Activated CD4-positive, alpha-beta T cell treated with anti-CD3 and anti-CD28 coated beads, Interleukin-2, amount 10 ng/mL, durations not matched to agents 24 days and 14 days (primary cell): ENCODE measurements at regions of chr12 and their contacts with region 1.

Region 1: DNA sequence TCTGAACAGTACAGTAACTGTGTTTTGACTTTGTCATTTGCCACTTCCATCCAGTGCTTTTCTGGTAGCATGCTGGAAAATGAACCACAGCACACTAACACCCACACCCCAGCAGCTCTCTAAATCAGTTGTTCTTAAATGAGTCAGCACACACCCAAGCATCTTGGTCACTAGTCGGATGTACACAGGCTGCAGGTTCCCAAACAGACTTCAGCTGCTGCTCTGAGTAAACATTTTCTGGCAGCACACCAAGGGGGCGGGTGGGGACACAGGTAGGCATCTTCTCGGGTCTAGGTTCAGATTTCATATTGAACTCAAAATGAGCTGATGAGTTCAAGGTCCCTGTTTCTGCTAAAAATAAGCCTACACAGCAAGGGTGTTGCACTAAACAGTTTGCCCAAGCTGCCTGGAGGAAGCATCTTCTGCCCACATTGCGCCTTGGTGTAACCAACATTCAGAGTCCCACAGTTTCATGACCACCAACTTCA is 39.8 kb downstream of the IFNG start:
- DNase-seq: peak; percentile 88
- H3K4me3 Mint-ChIP-seq: peak overlapping the region; percentile 39
- H3K27ac Mint-ChIP-seq: no peak overlapping the region
- H3K4me1 Mint-ChIP-seq: peaks cover 35% of the 10 kb centered on the region
- H3K27me3 Mint-ChIP-seq: no peaks in the 10 kb centered on the region

Region 2: DNA sequence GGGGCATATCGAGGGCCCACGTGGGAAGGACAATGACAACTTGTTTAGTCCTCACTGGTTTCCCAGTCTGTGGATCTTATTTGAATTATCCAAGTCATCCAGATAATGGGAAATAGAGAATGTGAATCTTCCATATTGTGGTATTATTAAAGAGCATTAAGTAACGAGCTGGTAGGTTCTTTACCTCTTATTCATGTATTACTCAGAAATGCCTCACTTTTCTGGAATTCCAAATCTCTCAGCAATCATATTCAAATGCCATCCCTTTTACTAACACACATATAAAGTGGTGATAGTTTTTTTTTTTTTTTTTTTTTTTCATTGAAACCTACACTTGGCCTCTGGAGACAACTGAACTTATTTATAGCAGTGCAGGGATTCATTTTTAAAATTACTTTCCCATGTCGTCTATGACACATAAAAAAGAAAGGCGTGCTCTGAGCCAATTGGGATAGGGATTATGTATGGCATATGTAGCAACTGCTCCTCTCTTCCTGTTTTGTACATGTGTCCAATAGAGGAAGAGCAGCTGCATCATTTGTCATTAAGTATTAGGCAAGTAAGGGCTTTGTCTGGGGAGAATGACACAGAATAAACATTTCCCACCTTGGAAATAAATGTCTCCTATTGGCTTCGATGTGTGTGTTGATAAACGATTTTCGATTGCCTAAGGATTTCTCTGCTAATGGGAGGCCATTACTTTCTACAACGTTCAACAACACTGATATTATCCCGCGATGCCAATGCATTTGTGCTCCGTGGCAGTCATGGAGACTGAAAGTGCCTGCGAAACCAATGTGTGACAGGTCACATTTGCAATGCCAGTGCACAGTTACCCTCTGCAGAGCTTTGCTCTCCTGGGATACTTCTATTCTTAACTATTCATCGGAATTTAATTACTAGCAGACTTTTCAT is 209.2 kb before region 1 on chr12:
- intact Hi-C with region 1: no loop called
- DNase-seq: peak; percentile 41
- H3K4me3 Mint-ChIP-seq: no peak overlapping the region
- H3K27ac Mint-ChIP-seq: no peak overlapping the region
- H3K4me1 Mint-ChIP-seq: no peaks in the 10 kb centered on the region
- H3K27me3 Mint-ChIP-seq: peaks cover 13% of the 10 kb centered on the region

Region 3: DNA sequence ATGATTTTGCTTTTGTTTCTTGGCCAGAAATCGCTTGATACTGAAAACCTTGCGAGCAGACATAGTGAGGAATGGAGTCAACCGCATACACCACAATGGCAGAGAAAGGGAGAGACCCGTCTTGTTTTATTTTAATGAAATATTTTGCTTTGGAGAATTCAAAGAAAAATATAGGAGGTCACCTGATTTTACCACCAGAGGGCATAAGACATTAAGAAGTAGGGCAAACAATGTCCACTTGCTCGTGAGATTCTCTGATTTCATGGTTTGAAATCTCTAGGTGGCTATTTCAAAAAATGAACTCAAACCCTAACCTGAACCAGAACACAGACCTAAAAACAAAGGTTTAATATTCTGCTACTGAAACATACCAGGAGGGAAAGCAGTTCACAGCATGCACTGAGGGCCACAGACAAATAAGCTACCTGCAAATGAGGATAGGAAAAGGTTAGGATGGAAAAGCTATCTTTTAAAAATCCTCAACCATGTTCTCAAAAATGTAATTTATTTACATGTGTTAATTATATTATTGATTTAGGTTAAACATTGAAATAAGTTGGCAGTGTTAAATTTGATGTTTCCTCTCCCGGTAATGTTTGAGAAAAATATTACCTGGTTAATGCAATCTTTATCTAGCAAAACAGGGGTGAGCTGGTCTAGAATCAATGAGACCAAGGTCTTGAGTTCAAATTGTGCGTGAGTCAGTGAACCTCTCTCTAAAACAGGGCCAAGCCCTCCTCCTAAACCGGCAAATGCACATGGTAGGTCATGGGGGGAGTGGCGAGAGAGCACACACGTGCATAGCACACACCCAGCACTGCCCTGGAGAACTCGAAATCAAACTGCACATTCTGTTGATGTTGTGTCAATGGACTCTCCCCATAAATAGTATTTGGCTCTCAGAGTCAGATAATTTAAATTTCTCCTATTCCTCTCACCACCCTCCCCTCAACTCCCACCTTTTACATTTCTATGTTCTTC is 118.0 kb before region 1 on chr12:
- intact Hi-C with region 1: loop called (anchors 1 kb)
- DNase-seq: no peak
- H3K4me3 Mint-ChIP-seq: no peak overlapping the region
- H3K27ac Mint-ChIP-seq: no peak overlapping the region
- H3K4me1 Mint-ChIP-seq: peaks cover 7% of the 10 kb centered on the region
- H3K27me3 Mint-ChIP-seq: no peaks in the 10 kb centered on the region

Region 4: GRCh38 chr12:68106160-68106559 is 13.6 kb before region 1 on chr12:
- intact Hi-C with region 1: loop called (anchors 1 kb)
- DNase-seq: no peak
- H3K4me3 Mint-ChIP-seq: no peak overlapping the region
- H3K27ac Mint-ChIP-seq: no peak overlapping the region
- H3K4me1 Mint-ChIP-seq: peaks cover 9% of the 10 kb centered on the region
- H3K27me3 Mint-ChIP-seq: peaks cover 6% of the 10 kb centered on the region

Region 5: DNA sequence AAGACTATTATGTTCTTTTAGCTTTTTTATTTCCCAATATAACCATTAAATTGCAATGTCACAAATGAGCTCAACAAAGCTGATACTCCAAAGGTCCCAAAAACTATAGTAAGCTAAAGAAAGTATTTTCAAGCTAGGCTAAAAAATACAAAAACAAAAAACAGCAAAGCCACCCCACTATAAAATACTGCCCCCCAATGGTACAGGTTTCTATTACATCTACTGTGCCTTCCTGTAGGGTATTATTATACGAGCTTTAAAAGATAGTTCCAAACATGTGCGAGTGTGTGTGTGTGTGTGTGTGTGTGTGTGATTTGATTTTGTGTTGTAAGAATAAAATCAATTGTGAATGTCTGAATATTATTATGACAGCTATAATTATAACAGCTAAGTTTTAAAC is 38.7 kb after region 1 on chr12:
- intact Hi-C with region 1: loop called (anchors 1 kb)
- DNase-seq: peak; percentile 81
- H3K4me3 Mint-ChIP-seq: peak overlapping the region; percentile 61
- H3K27ac Mint-ChIP-seq: peak overlapping the region; percentile 77
- H3K4me1 Mint-ChIP-seq: peaks cover 32% of the 10 kb centered on the region
- H3K27me3 Mint-ChIP-seq: no peaks in the 10 kb centered on the region

Region 6: DNA sequence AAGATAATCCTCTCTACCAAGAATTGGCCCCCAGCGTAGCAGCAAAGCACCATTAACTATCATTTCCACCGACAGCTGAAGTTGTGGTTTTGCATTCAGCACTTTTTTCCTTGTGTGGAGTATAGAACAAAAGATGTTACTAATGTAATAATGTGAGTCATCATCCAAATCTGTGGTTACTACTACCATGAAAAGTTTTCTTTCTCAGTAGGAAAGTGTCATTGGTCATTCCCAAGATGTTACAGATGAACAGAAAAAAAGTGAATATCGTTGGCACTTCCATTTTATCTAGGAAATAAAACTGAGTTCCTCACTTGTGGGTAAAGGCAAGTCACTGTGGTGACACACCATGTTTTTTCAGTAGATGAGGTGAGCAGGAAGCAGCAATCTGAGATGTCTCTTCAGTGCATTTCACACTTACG is 70.1 kb after region 1 on chr12:
- intact Hi-C with region 1: loop called (anchors 2 kb)
- DNase-seq: peak; percentile 78
- H3K4me3 Mint-ChIP-seq: peak overlapping the region; percentile 31
- H3K27ac Mint-ChIP-seq: peak overlapping the region; percentile 77
- H3K4me1 Mint-ChIP-seq: peaks cover 25% of the 10 kb centered on the region
- H3K27me3 Mint-ChIP-seq: no peaks in the 10 kb centered on the region

Region 7: GRCh38 chr12:68222326-68222725 is 102.6 kb after region 1 on chr12:
- intact Hi-C with region 1: no loop called
- DNase-seq: peak; percentile 54
- H3K4me3 Mint-ChIP-seq: peak overlapping the region; percentile 43
- H3K27ac Mint-ChIP-seq: no peak overlapping the region
- H3K4me1 Mint-ChIP-seq: peaks cover 17% of the 10 kb centered on the region
- H3K27me3 Mint-ChIP-seq: peaks cover 19% of the 10 kb centered on the region

Region 8: GRCh38 chr12:68290126-68290525 is 170.4 kb after region 1 on chr12:
- intact Hi-C with region 1: loop called (anchors 5 kb)
- DNase-seq: peak; percentile 80
- H3K4me3 Mint-ChIP-seq: peak overlapping the region; percentile 19
- H3K27ac Mint-ChIP-seq: peak overlapping the region; percentile 55
- H3K4me1 Mint-ChIP-seq: peaks cover 43% of the 10 kb centered on the region
- H3K27me3 Mint-ChIP-seq: peaks cover 5% of the 10 kb centered on the region